Activated CD4-positive, alpha-beta memory T cell treated with anti-CD3 and anti-CD28 coated beads for 36 hours (primary cell): ENCODE measurements at regions of chr5 and their contacts with region 1.

Region 1: GRCh38 chr5:74631081-74631953 is 9.2 kb downstream of the ENC1 start:
- DNase-seq: peak; percentile 49
- H3K4me3 Mint-ChIP-seq: no peak overlapping the region
- H3K27ac Mint-ChIP-seq: peak overlapping the region; percentile 72
- H3K4me1 Mint-ChIP-seq: peaks cover 25% of the 10 kb centered on the region
- H3K27me3 Mint-ChIP-seq: peaks cover 16% of the 10 kb centered on the region

Region 2: DNA sequence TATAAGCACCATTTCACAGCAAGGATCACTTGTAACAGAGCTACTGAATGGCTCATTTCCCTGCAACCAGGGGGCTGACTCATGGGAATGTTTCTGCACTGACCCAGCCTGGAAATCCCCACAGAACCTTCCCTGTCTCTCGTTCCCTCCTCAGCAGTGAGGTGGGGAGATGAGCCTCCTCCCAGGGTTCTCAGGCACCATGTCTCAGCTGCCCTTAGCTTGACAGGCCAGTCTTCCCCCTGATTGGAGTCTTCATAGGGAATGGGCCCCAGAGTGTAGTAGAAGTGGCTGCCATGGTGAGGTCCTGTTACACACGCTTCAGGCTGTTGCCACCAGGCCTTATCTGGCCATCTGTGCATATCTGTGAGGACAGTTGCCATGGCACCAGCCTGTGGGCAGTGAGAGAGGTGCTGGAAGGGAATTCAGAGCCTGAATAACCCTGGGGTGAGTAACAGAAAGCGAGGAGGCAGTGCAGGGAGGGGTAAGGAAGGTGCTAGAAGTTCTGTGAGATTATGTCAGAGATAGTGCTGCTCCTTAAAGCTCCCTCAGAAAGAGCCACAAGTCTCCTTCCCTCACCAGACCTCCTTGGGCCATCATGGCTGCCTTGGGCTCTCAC is 315.1 kb before region 1 on chr5:
- CTCF ChIA-PET with region 1: no interaction called
- POLR2A ChIA-PET with region 1: no interaction called
- intact Hi-C with region 1: loop called (anchors 5 kb)
- DNase-seq: peak; percentile 62
- H3K4me3 Mint-ChIP-seq: no peak overlapping the region
- H3K27ac Mint-ChIP-seq: no peak overlapping the region
- H3K4me1 Mint-ChIP-seq: peaks cover 24% of the 10 kb centered on the region
- H3K27me3 Mint-ChIP-seq: peaks cover 30% of the 10 kb centered on the region

Region 3: GRCh38 chr5:76521240-76521758 is 1890.0 kb after region 1 on chr5:
- CTCF ChIA-PET with region 1: no interaction called
- POLR2A ChIA-PET with region 1: no interaction called
- intact Hi-C with region 1: loop called (anchors 5 kb)
- DNase-seq: no peak
- H3K4me3 Mint-ChIP-seq: peak overlapping the region; percentile 30
- H3K27ac Mint-ChIP-seq: peak overlapping the region; percentile 91
- H3K4me1 Mint-ChIP-seq: peaks cover 83% of the 10 kb centered on the region
- H3K27me3 Mint-ChIP-seq: no peaks in the 10 kb centered on the region